Thyroid gland (tissue), 4 donors: ENCODE measurements at regions of chr9 and their contacts with region 1.

Region 1: GRCh38 chr9:73038613-73039012 is 85.8 kb upstream of the ALDH1A1 start:
- DNase-seq: peak; percentile 24 to 39
- H3K4me3 ChIP-seq: no peak overlapping the region
- H3K27ac ChIP-seq: peak overlapping the region; percentile 73 to 88 (median 84)
- H3K4me1 ChIP-seq: peaks cover 18 to 22% of the 10 kb centered on the region in 2 donors
- H3K27me3 ChIP-seq: no peaks in the 10 kb centered on the region
- CTCF ChIP-seq: no peak
- POLR2A ChIP-seq: no peak

Region 2: GRCh38 chr9:73081979-73082657 is 43.5 kb after region 1 on chr9:
- intact Hi-C with region 1: loop called (anchors 10 kb)
- DNase-seq: no peak
- H3K4me3 ChIP-seq: no peak overlapping the region
- H3K27ac ChIP-seq: no peak overlapping the region
- H3K4me1 ChIP-seq: peaks cover 0 to 3% of the 10 kb centered on the region in 2 donors
- H3K27me3 ChIP-seq: no peaks in the 10 kb centered on the region
- CTCF ChIP-seq: peak; percentile 56 to 86 (median 68)
- POLR2A ChIP-seq: no peak